OCI-LY7 (cell line): ENCODE measurements at regions of chr15 and their contacts with region 1.

Region 1: DNA sequence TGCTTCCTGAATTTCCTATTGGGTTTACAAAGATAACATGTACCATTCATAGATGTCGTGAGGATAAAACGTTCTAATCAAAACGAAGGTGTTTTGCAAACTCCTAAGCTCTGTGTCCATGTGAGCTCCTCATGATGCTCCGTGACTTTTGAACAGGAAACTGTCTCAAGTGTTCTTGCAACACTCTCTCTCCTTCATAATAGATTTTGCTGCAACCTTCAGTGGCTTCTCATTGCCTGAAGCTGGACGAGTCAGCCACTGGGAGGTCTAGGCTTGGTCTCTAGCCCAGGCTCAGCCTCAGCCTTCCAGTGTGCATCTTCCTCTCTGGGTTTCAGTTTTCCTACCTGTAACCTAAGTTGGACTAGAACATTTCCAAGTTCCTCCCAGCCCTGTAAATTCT is 18.7 kb upstream of the BCL2A1 start:
- DNase-seq: no peak
- H3K4me3 ChIP-seq: no peak overlapping the region
- H3K27ac ChIP-seq: no peak overlapping the region
- H3K4me1 ChIP-seq: no peaks in the 10 kb centered on the region
- CTCF ChIP-seq: no peak

Region 2: DNA sequence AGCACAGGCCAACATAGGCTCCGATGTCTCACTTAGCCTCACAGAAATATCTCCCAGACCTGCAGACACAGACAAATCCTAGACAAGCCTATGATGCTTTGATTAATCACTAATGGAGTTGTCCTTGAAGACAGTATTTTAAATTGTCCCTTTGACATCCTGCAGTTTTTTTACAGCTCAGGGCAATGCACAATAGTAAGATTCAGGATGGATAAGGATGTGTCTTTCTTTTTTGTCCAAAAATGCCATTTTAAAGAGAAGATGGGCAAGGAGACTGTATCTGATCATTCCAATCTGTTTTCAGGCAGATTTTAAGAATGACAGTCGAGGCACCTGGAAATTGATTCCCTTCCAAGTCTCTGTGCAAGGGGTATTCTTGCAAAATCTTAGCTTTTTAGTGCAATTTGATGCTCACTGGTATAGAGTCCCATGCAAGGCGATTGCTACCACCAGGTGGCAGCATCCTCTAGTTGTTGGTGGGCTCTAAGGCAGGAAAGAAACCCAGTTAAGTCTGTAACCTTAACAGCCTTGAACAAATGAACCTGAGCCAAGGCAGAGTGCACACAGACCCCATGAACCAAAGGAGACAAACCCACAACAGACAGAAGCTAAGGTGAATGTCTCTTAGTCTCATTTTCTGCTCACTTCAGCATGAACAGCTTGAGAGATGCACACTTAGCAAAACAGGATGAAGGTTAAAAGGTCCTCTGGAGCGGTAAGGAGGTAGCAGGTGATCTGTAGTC is 608.8 kb before region 1 on chr15:
- CTCF ChIA-PET with region 1: no interaction called
- POLR2A ChIA-PET with region 1: no interaction called
- intact Hi-C with region 1: loop called (anchors 1 kb)
- DNase-seq: peak; percentile 74
- H3K4me3 ChIP-seq: no peak overlapping the region
- H3K27ac ChIP-seq: no peak overlapping the region
- H3K4me1 ChIP-seq: no peaks in the 10 kb centered on the region
- CTCF ChIP-seq: peak; percentile 96

Region 3: DNA sequence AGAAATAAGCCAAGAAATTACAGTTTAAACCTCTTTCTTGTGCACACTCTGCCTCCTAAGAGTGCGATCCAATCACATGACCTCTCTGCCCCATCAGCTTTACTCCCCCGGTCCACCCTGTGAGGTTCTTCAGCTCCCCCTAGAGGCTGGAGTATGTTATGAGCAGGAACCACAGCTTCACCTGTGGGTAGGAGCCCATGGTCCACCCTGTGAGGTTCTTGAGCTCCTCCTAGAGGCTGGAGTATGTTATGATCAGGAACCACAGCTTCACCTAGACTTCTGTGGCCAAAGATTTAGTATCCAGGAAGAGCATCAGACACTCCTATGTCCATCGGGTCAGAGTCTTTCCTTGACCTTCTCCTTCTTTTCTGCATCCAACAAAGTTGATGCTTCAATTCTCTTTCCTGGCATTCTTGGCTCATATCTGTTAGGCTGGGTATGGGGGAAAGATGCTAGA is 393.6 kb before region 1 on chr15:
- CTCF ChIA-PET with region 1: no interaction called
- POLR2A ChIA-PET with region 1: no interaction called
- intact Hi-C with region 1: loop called (anchors 10 kb)
- DNase-seq: peak; percentile 92
- H3K4me3 ChIP-seq: no peak overlapping the region
- H3K27ac ChIP-seq: no peak overlapping the region
- H3K4me1 ChIP-seq: no peaks in the 10 kb centered on the region
- CTCF ChIP-seq: peak; percentile 99

Region 4: DNA sequence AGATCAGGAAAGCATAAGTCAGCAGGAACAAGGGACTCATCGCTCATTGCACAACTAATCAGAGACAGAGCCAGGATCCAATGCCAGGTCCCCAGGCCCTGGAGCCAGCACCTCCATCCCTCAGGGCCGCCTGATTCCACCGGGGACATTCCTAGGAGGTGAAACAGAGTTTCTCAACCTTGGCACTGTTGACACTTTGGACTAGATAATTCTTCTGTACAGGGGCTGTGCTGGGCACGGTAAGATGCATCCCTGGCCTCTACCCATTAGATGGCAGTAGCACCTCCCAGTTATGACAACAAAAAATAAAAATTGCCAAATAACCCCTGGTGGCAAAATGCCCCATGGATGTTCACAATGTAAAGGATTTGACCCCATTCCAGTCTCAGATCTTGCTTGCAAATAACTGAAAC is 220.6 kb before region 1 on chr15:
- CTCF ChIA-PET with region 1: no interaction called
- POLR2A ChIA-PET with region 1: no interaction called
- intact Hi-C with region 1: loop called (anchors 1 kb)
- DNase-seq: peak; percentile 21
- H3K4me3 ChIP-seq: no peak overlapping the region
- H3K27ac ChIP-seq: no peak overlapping the region
- H3K4me1 ChIP-seq: no peaks in the 10 kb centered on the region
- CTCF ChIP-seq: peak; percentile 77

Region 5: GRCh38 chr15:79853458-79854328 is 136.0 kb before region 1 on chr15:
- CTCF ChIA-PET with region 1: no interaction called
- POLR2A ChIA-PET with region 1: no interaction called
- intact Hi-C with region 1: loop called (anchors 2 kb)
- DNase-seq: peak; percentile 70
- H3K4me3 ChIP-seq: no peak overlapping the region
- H3K27ac ChIP-seq: no peak overlapping the region
- H3K4me1 ChIP-seq: no peaks in the 10 kb centered on the region
- CTCF ChIP-seq: peak; percentile 97

Region 6: DNA sequence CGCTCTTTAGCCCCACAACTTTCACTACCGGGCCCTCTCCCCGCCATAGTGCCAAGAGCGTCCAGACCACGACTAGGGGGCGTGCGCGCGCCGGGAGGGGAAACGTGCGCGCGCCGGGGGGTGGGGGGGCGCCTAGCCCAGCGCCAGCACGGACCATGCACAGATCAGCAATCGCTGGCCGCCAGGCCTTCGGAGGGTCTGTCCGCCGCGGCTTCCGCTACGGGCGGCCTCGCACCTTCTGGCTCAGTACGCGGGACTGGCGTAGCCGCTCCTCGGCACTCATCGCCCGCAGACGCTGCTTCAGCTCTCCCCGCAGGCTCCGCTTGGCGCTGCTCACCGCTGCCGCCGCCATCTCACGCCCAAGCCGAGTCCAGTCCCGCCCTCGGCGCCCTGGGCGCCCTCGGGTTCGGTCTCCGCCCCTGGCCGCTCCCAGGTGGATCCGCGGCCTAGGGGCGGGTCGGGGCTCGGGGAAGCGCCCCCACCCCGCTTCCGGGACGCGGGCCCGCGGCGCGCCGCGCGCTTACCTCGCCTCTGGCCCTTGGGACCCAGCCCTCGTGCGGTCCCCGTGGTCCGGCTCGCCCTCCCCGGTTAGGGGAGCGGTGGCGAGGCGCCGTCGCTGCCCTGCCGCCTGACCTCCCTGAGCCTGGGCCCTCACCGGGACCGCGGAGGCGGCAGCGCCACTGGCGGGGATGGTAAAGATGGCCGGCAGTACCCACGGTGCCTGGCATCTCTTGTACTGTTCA is 92.9 kb before region 1 on chr15 and contains the start of gene MTHFS:
- CTCF ChIA-PET with region 1: no interaction called
- POLR2A ChIA-PET with region 1: no interaction called
- intact Hi-C with region 1: loop called (anchors 1 kb)
- DNase-seq: peak; percentile 85
- H3K4me3 ChIP-seq: peak within 1 kb of the TSS; percentile 80
- H3K27ac ChIP-seq: peak within 1 kb of the TSS; percentile 62
- H3K4me1 ChIP-seq: peaks cover 19% of the 10 kb centered on the region
- CTCF ChIP-seq: peak; percentile 69
- total RNA-seq, gene MTHFS: 12.4 and 16.4 TPM in 2 replicates

Region 7: GRCh38 chr15:80003171-80003570 is 13.5 kb after region 1 on chr15:
- CTCF ChIA-PET with region 1: no interaction called
- POLR2A ChIA-PET with region 1: no interaction called
- intact Hi-C with region 1: no loop called
- DNase-seq: no peak
- H3K4me3 ChIP-seq: no peak overlapping the region
- H3K27ac ChIP-seq: no peak overlapping the region
- H3K4me1 ChIP-seq: peaks cover 5% of the 10 kb centered on the region
- CTCF ChIP-seq: no peak

Region 8: GRCh38 chr15:80058851-80059785 is 69.4 kb after region 1 on chr15 and contains the start of gene ZFAND6:
- CTCF ChIA-PET with region 1: no interaction called
- POLR2A ChIA-PET with region 1: no interaction called
- intact Hi-C with region 1: no loop called
- DNase-seq: peak; percentile 96
- H3K4me3 ChIP-seq: peak within 1 kb of the TSS; percentile 94
- H3K27ac ChIP-seq: peak within 1 kb of the TSS; percentile 81
- H3K4me1 ChIP-seq: peaks cover 40% of the 10 kb centered on the region
- CTCF ChIP-seq: 0 out of 2 replicates have a peak, but pooled peaks have one; percentile 29
- total RNA-seq, gene ZFAND6: 111 and 122 TPM in 2 replicates

Region 9: GRCh38 chr15:80173022-80173759 is 183.5 kb after region 1 on chr15:
- CTCF ChIA-PET with region 1: no interaction called
- POLR2A ChIA-PET with region 1: no interaction called
- intact Hi-C with region 1: loop called (anchors 1 kb)
- DNase-seq: peak; percentile 79
- H3K4me3 ChIP-seq: no peak overlapping the region
- H3K27ac ChIP-seq: no peak overlapping the region
- H3K4me1 ChIP-seq: no peaks in the 10 kb centered on the region
- CTCF ChIP-seq: peak; percentile 83